Left ventricle myocardium inferior (tissue), 1 donor: ENCODE measurements at regions of chr1 and their contacts with region 1.

Region 1: DNA sequence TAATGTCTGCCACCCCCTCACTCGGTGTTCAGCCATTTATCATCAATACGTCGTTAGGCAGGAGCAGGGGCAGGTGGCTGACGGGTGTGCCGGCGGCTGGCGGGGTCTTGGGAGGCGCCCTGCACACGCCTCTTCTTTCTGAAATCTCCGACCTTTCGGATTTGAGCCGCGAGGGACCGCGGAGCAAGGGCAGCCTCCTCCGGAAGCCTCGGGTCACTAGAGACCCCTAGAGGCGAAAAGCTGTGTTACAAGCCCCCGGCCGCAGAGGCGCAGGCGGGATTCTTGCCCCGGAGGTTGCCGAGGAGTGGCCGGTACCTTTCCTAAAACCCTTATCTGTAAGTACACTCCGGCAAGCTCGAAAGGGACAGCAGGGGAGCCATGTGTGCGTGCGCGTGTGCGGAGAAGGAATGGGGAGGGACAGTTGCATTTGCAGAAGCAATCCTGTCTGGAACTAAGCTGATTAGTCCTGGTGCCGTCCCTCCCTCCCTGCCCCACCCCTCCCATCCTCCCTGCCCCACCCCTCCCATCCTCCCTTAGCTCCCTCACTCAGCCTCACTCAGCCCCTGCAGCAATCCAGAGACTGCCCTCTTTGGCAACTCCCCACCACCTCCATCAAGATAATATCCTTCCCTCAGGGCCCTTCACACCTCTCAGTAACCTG is 11.0 kb downstream of the BRINP2 start:
- DNase-seq: peak; percentile 47
- H3K4me3 ChIP-seq: peak overlapping the region; percentile 42
- H3K27ac ChIP-seq: no peak overlapping the region
- H3K4me1 ChIP-seq: peaks cover 7% of the 10 kb centered on the region
- H3K27me3 ChIP-seq: peaks cover 88% of the 10 kb centered on the region
- CTCF ChIP-seq: peak; percentile 89

Region 2: GRCh38 chr1:177246710-177247580 is 65.2 kb after region 1 on chr1:
- intact Hi-C with region 1: loop called (anchors 10 kb)
- DNase-seq: no peak
- H3K4me3 ChIP-seq: no peak overlapping the region
- H3K27ac ChIP-seq: peak overlapping the region; percentile 40
- H3K4me1 ChIP-seq: no peaks in the 10 kb centered on the region
- H3K27me3 ChIP-seq: no peaks in the 10 kb centered on the region
- CTCF ChIP-seq: no peak

Region 3: DNA sequence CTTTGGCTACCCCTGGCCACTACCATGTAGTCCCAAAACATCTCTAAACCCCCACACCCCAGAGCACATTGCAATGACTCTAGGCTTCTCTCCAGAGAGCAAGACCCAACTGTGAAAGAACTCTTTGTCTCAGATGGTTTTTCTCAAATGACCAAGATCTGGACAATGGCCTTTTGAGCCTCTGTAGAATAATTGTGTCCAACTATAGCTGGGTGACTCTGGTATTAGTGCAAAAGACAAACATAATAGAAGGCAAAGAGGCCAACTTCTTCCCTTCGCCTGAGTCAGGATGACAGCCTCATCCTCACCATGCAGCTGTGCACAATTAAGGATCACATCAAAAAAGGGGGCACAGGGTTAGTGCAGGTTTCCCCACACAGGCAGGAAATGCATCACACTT is 128.6 kb after region 1 on chr1:
- intact Hi-C with region 1: no loop called
- DNase-seq: no peak
- H3K4me3 ChIP-seq: no peak overlapping the region
- H3K27ac ChIP-seq: no peak overlapping the region
- H3K4me1 ChIP-seq: no peaks in the 10 kb centered on the region
- H3K27me3 ChIP-seq: peaks cover 76% of the 10 kb centered on the region
- CTCF ChIP-seq: no peak